ENCODE measurements at regions of chr5 and their contacts with region 1.

Region 1: DNA sequence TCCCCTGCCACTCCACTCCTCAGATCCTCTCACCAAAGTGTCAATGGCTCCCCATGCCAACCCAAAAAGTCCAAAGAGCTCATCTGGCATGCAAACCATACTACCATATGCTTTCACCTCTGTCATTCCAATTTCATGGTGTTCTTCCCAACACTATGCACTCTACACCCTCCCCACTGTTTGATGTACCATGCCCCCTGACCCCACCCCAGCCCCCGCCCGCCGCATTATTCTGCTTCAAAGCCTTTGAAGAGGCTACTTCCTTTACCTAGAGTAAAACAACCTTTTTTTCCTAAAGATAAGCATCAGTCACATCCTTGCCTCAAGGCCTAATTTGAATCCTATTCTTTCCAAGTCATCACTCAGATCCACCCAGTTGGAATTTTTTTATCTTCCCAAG is 226.3 kb downstream of the DEPDC1B start:
- DNase-seq: peak; percentile 91
- ATAC-seq: peak; percentile 97
- H3K4me3 ChIP-seq: no peak overlapping the region
- H3K27ac ChIP-seq: peak overlapping the region; percentile 51
- H3K4me1 ChIP-seq: peaks cover 43% of the 10 kb centered on the region
- H3K27me3 ChIP-seq: no peaks in the 10 kb centered on the region
- CTCF ChIP-seq: no peak
- EP300 ChIP-seq: peak in 1 of 2 experiments; percentile 84; a peak in 2 of 4 replicates
- POLR2A ChIP-seq: no peak
- RAD21 ChIP-seq: no peak

Region 2: GRCh38 chr5:60463179-60463868 is 10.3 kb before region 1 on chr5:
- CTCF ChIA-PET with region 1: no interaction called
- POLR2A ChIA-PET with region 1: interaction called, 17 read pairs
- in situ Hi-C with region 1: no loop called
- intact Hi-C with region 1: no loop called
- DNase-seq: peak; percentile 81
- ATAC-seq: peak; percentile 92
- H3K4me3 ChIP-seq: peak overlapping the region in 1 of 3 experiments; percentile 17; a peak in 1 of 6 replicates
- H3K27ac ChIP-seq: peak overlapping the region; percentile 79
- H3K4me1 ChIP-seq: peaks cover 44% of the 10 kb centered on the region
- H3K27me3 ChIP-seq: no peaks in the 10 kb centered on the region
- CTCF ChIP-seq: no peak
- EP300 ChIP-seq: peak in 1 of 2 experiments; percentile 56; a peak in 2 of 4 replicates
- POLR2A ChIP-seq: no peak
- RAD21 ChIP-seq: no peak

Region 3: GRCh38 chr5:60649283-60649917 is 175.7 kb after region 1 on chr5:
- CTCF ChIA-PET with region 1: no interaction called
- POLR2A ChIA-PET with region 1: no interaction called
- in situ Hi-C with region 1: no loop called
- intact Hi-C with region 1: no loop called
- DNase-seq: peak; percentile 59
- ATAC-seq: peak; percentile 66
- H3K4me3 ChIP-seq: no peak overlapping the region
- H3K27ac ChIP-seq: no peak overlapping the region
- H3K4me1 ChIP-seq: peaks cover 22% of the 10 kb centered on the region
- H3K27me3 ChIP-seq: no peaks in the 10 kb centered on the region
- CTCF ChIP-seq: peak; percentile 65
- EP300 ChIP-seq: no peak
- POLR2A ChIP-seq: no peak
- RAD21 ChIP-seq: peak; percentile 52; the same call in 1 of the 2 replicates